ENCODE measurements at regions of chr1 and their contacts with region 1.

Region 1: GRCh38 chr1:204128964-204129896 is 22.6 kb downstream of the ETNK2 start:
- DNase-seq: peak; percentile 71
- H3K27ac ChIP-seq: peak overlapping the region; percentile 89
- CTCF ChIP-seq: peak; percentile 75

Region 2: DNA sequence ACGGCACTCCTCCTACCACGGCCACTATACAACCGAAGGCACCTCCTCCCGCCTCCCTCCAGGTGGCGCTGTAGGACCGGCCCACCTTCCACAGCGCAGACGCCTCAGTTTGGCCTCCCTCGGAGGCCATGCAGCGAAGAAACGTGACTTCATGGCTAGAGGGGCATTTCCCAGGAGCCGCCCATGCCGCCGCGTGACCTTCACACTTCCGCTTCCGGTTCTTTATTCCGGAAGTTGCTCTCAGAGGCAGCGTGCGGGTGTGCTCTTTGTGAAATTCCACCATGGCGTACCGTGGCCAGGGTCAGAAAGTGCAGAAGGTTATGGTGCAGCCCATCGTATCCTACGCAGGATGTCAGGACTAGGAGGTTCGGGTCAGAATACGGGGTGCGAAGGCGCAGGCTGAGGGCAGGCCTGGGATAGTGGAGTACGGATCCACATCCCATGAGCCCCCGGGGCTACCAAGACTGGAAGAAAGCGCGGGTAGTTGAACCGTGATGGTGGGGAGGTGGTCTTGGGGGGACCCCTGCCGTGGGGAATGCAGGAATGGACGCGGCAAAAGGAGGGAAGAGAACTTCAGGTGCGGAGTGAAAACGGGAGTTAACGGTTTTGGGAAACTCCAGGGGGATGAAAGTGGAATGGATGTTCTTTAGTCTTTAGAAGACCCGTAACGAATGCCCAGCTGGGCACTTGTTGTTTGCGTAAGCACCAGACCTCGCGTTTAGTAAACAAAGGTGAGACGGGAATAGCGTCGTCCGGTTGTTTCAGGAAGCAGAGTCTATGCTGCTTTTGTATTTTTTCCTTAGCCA is 267.6 kb before region 1 on chr1 and contains the start of gene SNRPE:
- CTCF ChIA-PET with region 1: interaction called, 27 read pairs
- POLR2A ChIA-PET with region 1: no interaction called
- DNase-seq: peak; percentile 98
- H3K27ac ChIP-seq: peak within 1 kb of the TSS; percentile 99
- CTCF ChIP-seq: peak; percentile 96

Region 3: DNA sequence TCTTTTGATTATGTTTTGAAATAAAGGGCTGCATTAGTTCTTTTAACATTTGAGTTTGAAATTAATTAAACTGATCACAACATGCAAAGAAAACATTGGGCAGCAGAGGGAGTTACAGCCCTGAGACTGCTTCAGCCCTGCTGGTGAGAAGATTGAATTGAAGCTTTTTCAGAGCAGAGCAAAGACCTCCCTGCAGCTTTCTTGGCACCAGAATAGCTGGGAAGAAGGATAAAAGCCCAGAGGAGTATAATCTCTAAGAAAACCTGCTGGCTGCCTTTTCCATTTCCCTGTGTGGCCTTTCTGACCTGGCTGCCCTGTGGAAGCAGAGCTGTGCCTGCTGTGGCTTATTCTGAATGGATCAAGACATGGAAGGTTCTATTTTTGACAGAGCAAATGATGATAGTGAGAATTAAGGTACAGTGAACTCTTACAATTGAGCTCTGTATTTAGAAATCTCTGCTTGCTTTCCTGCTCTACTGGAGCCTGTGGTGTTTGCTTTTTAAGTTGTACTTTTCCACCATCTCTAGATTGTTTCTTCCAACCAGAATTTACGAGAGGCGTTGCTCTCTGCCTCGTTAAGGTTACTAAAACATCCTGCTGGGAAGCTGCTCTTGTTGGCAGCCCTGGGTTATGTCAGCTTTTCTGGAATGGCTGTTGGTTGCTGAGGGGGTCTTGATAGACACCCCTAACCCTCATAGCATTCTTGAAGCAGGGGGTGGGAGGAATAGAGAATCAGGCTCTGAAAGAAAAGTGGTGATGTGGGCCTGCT is 257.9 kb before region 1 on chr1:
- CTCF ChIA-PET with region 1: interaction called, 163 read pairs
- POLR2A ChIA-PET with region 1: interaction called, 3 read pairs
- DNase-seq: peak; percentile 94
- H3K27ac ChIP-seq: no peak overlapping the region
- CTCF ChIP-seq: peak; percentile 79

Region 4: DNA sequence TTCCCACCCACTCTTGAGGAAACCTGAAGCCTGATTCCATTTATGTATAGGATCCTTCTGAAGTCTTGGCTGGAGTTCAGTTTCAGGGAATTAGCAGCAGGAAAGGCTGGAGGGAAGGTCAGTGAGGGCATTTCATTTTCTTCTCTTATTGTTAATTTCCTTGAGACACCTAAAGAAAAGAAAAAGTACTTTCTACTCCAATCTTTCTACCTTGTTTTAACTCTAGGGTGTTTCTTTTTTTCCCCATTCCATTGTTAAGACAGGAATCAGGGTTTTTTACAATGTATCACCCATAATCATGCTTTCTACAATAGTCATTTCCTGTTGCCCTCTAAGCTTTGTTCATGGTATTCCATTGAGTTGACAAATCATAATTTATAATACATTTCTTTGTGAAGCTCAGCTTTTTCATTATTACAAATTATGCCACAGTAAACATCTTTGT is 240.4 kb before region 1 on chr1:
- CTCF ChIA-PET with region 1: interaction called, 17 read pairs
- POLR2A ChIA-PET with region 1: no interaction called
- DNase-seq: peak; percentile 93
- H3K27ac ChIP-seq: no peak overlapping the region; the same call in 1 of the 2 replicates
- CTCF ChIP-seq: no peak

Region 5: DNA sequence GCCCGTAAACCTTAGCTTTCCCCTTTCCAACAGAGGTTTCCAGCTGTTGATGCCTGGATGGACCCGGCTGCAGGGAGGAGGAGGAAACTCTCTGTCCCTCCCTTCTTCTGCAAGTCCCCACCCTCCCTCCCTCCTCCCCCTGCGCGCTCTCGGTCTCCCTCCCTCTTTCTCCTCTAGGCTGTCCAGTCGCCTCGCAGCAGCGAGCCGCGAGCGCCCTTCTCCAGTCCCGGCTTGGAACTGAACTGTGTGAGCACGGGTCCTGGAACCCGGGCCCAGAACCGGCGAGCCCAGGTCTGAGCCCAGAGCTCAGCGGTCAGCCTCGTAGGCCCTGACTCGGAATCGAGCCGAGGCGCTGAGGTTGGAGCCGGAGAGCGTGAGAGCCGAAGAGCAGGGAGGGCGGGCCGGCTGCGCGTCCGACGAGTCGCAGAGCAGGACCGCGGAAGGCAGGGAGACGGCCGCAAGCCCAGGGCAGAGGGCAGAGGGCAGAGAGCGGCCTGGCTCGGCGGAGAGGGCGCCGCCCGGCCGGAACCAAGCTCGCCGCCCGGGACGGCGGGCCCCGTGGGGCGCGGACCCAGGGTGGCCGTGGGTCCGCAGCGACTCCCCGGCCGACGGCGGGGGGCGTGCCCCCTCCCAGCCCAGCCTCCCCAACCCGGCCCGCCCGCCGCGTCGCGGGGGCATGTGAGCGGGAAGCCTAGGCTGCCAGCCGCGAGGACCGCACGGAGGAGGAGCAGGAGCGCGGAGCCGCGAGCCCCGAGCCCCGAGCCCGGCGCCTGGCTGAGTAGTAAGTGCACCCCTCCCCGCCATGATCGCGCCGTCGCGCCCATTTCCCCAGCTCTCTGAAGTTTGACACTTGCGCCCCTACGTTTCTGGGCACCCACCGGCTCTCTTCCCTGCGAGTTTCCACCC is 56.0 kb before region 1 on chr1 and contains the start of gene SOX13:
- CTCF ChIA-PET with region 1: interaction called, 57 read pairs
- POLR2A ChIA-PET with region 1: no interaction called
- DNase-seq: peak; percentile 97
- H3K27ac ChIP-seq: peak within 1 kb of the TSS; percentile 85
- CTCF ChIP-seq: no peak

Region 6: GRCh38 chr1:204114606-204115005 is 14.6 kb before region 1 on chr1:
- CTCF ChIA-PET with region 1: interaction called, 56 read pairs
- POLR2A ChIA-PET with region 1: no interaction called
- DNase-seq: no peak
- H3K27ac ChIP-seq: no peak overlapping the region
- CTCF ChIP-seq: no peak

Region 7: DNA sequence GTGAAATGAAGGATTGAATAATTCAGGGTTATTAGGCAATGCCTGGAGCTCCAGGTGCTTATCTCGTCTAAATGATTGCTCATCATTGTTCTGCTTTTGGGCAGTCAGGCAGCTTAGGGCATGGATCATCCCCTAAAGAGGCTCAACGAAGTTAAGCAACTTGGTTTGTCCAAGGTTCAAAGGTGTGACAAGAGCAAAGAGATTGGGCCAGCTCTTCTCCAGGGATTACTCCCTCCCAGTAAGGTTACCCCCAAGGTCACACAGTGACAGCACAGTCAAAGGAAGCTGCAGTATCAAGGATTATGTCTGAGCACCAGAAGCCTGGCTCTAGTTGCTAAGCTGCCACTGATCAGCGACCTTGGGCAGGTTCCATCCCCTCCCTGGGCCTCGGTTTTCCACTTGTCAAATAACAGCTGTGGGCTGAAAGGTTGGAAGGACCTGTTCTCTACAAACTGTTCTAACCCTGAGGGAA is 15.8 kb after region 1 on chr1:
- CTCF ChIA-PET with region 1: interaction called, 10 read pairs
- POLR2A ChIA-PET with region 1: no interaction called
- DNase-seq: peak; percentile 58
- H3K27ac ChIP-seq: no peak overlapping the region
- CTCF ChIP-seq: no peak

Region 8: DNA sequence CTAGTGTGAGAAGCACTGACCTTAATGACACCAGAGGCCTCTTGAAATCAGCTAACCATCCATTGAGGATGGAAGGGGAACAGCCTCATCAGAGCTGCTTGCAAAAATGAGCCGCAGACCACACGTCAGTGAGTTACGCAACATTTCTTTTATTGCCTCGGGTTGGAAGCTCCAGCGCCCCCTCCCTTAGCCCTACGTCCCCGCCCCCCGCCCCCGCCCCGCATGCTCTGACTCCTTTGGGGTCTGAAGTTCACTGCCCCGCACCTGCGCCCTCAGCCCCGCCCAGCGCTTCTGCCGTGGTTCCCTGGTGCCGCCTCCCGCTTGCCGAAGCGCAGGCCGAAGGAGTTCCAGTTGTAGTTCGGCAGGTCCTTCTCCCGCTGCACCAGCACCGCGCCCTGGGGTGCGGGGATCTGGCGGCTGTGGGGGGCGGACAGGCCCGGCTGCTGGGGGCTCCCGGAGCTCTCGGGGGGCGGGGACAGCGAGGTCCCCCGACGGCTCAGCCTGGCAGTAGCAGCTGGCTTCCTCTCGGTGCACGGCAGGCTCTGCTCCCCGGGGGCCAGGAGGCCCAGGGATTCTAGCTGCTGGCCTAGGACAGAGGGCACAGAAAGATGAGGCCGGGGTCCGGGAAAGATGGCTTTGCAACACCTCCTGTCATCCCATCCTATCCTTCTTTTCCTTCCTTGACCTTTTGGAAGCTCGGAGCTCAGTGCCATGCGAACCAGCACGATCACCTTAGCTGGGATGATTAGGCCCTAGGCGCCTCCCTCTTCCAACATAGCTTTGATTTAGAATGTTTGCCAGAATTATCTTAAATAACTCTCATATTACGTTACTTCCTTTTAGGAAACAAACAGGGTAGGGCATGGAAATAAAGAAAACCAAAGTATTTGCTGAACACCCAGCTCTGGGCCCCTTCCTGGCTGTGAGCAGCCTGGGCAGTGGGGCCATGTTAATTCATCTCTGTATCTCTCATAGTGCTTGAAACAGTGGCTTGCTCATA is 61.3 kb after region 1 on chr1:
- CTCF ChIA-PET with region 1: no interaction called
- POLR2A ChIA-PET with region 1: no interaction called
- DNase-seq: peak; percentile 55
- H3K27ac ChIP-seq: no peak overlapping the region
- CTCF ChIP-seq: no peak

Region 9: GRCh38 chr1:204219971-204220608 is 90.9 kb after region 1 on chr1:
- CTCF ChIA-PET with region 1: no interaction called
- POLR2A ChIA-PET with region 1: no interaction called
- DNase-seq: no peak
- H3K27ac ChIP-seq: no peak overlapping the region
- CTCF ChIP-seq: no peak

Measured in RWPE1 (cell line).